Naive thymus-derived CD4-positive, alpha-beta T cell (primary cell): ENCODE measurements at regions of chr18 and their contacts with region 1.

Region 1: DNA sequence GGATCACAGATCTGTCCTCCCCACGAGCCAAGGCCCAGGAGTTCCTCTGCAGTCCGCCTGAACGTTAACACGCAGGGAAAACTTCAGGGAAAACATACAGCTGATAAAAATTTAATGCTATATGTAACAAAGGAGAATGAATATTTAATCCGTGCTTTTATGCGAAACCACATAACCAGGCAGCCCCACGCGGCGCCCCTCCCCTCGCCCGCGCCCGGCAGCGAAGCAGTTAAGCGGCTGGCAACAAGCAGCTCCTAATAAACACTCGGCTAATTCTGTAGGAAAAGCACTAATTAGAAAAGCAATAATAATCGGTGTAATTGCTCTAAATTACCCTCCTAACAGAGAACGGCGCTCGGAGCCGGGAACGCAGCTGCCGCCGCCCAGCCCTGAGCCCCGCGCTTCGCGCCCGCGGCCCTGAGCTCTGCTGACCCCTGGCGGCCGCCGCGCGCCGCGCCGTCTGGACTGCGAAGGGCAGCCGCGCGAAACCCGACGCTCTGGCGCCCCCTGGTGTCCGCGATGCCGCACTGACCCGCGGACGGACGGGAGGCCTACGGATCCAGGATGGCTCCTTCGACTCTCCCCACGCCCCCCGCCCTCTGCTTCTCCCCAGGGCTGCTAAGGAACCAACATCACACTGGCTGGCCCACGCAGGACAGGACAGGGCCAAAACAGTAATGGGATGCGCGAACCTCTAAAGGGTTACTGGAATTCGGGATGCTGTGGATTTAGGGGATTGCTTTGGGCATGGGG is 181.4 kb downstream of the SMAD2 start:
- DNase-seq: peak; percentile 54 to 92 (median 84)
- ATAC-seq: peak; percentile 100
- H3K4me3 ChIP-seq: no peak overlapping the region
- H3K4me3 Mint-ChIP-seq: peak overlapping the region in 8 of 10 donors; percentile 23 to 57 (median 40)
- H3K27ac ChIP-seq: no peak overlapping the region
- H3K27ac Mint-ChIP-seq: peak overlapping the region in 2 of 9 donors; percentile 28 to 40
- H3K4me1 ChIP-seq: peaks cover 0 to 6% of the 10 kb centered on the region in 2 donors
- H3K4me1 Mint-ChIP-seq: peaks cover 0 to 6% (median 0%) of the 10 kb centered on the region in 7 donors
- H3K27me3 ChIP-seq: peaks cover 0 to 8% of the 10 kb centered on the region in 2 donors
- H3K27me3 Mint-ChIP-seq: peaks cover 0 to 11% (median 4%) of the 10 kb centered on the region in 5 donors

Region 2: GRCh38 chr18:47050468-47050867 is 698.6 kb before region 1 on chr18:
- CTCF ChIA-PET with region 1: interaction called, 3 read pairs
- POLR2A ChIA-PET with region 1: no interaction called
- intact Hi-C with region 1: loop called in 1 of 2 experiments (anchors 1 kb)
- DNase-seq: peak in 5 of 9 donors; percentile 3 to 13 (median 8)
- ATAC-seq: no peak
- H3K4me3 ChIP-seq: no peak overlapping the region
- H3K4me3 Mint-ChIP-seq: no peak overlapping the region
- H3K27ac ChIP-seq: no peak overlapping the region
- H3K27ac Mint-ChIP-seq: no peak overlapping the region
- H3K4me1 ChIP-seq: no peaks in the 10 kb centered on the region
- H3K4me1 Mint-ChIP-seq: peaks cover 0 to 5% (median 0%) of the 10 kb centered on the region in 7 donors
- H3K27me3 ChIP-seq: no peaks in the 10 kb centered on the region
- H3K27me3 Mint-ChIP-seq: peaks cover 0 to 8% (median 4%) of the 10 kb centered on the region in 5 donors

Region 3: DNA sequence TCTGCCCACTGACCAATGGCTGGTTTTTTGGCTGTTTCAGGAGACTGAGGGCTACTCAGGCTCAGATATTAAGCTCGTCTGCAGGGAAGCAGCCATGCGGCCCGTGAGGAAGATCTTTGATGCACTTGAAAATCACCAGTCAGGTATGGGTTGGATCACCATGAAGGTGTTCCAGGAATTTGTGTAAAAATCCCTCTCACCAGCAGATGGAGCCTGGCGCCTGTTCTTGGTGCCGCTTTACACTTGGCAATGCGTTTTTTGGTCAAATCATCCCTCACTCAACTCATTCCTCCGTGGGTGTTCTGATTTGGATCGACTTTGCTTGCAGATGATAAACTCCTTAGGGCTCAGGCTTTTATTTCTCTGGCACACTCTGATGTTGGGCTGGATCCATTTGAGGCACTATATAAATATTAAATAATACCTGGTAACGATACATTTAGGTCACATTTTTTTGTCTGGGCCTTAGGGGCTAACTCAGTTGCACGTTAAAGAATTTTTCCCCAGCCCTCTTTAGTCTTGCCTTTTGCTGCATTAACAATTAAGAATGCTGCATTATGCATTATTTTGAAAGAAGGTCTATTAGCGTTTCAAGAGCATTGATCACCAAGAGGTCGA is 648.7 kb before region 1 on chr18:
- CTCF ChIA-PET with region 1: interaction called, 6 read pairs
- POLR2A ChIA-PET with region 1: no interaction called
- intact Hi-C with region 1: loop called in 1 of 2 experiments (anchors 1 kb)
- DNase-seq: peak; percentile 16 to 63 (median 51)
- ATAC-seq: peak; percentile 68
- H3K4me3 ChIP-seq: no peak overlapping the region
- H3K4me3 Mint-ChIP-seq: no peak overlapping the region
- H3K27ac ChIP-seq: no peak overlapping the region
- H3K27ac Mint-ChIP-seq: no peak overlapping the region
- H3K4me1 ChIP-seq: no peaks in the 10 kb centered on the region
- H3K4me1 Mint-ChIP-seq: no peaks in the 10 kb centered on the region
- H3K27me3 ChIP-seq: no peaks in the 10 kb centered on the region
- H3K27me3 Mint-ChIP-seq: no peaks in the 10 kb centered on the region

Region 4: GRCh38 chr18:47215554-47216138 is 533.4 kb before region 1 on chr18:
- CTCF ChIA-PET with region 1: interaction called, 3 read pairs
- POLR2A ChIA-PET with region 1: no interaction called
- intact Hi-C with region 1: loop called in 1 of 2 experiments (anchors 1 kb)
- DNase-seq: peak in 4 of 9 donors; percentile 11 to 31 (median 16)
- ATAC-seq: no peak
- H3K4me3 ChIP-seq: no peak overlapping the region
- H3K4me3 Mint-ChIP-seq: no peak overlapping the region
- H3K27ac ChIP-seq: no peak overlapping the region
- H3K27ac Mint-ChIP-seq: no peak overlapping the region
- H3K4me1 ChIP-seq: no peaks in the 10 kb centered on the region
- H3K4me1 Mint-ChIP-seq: peaks cover 0 to 4% (median 0%) of the 10 kb centered on the region in 7 donors
- H3K27me3 ChIP-seq: peaks cover 0 to 5% of the 10 kb centered on the region in 2 donors
- H3K27me3 Mint-ChIP-seq: peaks cover 46 to 67% (median 62%) of the 10 kb centered on the region in 5 donors

Region 5: DNA sequence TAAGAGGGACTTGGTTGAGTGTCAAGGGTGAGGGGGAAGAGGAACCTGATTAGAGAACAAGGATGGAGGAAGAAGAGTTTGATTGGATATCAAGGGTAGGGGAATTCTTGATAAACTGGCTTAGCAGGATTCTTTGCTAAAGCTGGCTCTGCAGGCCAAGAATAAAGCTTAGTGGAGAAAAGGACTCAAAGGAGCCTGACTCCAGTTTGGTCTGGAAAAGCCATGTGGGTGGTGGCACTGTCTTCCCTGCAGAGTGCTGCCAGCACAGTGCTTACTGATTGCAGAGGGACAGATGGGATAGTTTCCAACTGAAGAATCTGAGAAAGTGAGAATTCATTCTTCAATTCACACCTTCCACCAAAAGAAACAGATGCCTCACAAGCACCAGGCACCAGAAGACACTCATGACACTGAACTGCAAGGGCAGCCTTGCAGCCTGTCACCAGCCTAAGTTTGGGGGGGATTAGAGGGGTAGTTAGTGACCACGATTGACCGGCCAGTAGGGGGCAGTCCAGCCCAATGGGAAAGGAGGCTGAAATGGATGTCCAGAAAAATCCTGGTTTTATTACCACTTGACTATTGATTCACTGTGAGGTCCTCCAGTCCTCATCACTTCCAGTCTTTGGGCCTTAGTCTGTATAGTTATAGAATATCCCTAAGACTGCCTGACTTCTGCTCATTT is 153.1 kb before region 1 on chr18:
- CTCF ChIA-PET with region 1: no interaction called
- POLR2A ChIA-PET with region 1: no interaction called
- intact Hi-C with region 1: loop called in 1 of 2 experiments (anchors 2 kb)
- DNase-seq: no peak
- ATAC-seq: no peak
- H3K4me3 ChIP-seq: no peak overlapping the region
- H3K4me3 Mint-ChIP-seq: no peak overlapping the region
- H3K27ac ChIP-seq: no peak overlapping the region
- H3K27ac Mint-ChIP-seq: no peak overlapping the region
- H3K4me1 ChIP-seq: no peaks in the 10 kb centered on the region
- H3K4me1 Mint-ChIP-seq: peaks cover 0 to 5% (median 0%) of the 10 kb centered on the region in 7 donors
- H3K27me3 ChIP-seq: no peaks in the 10 kb centered on the region
- H3K27me3 Mint-ChIP-seq: peaks cover 22 to 46% (median 35%) of the 10 kb centered on the region in 5 donors